Pancreas (tissue), 10 donors: ENCODE measurements at regions of chr22 and their contacts with region 1.

Region 1: GRCh38 chr22:37686002-37686982 is at the start of gene NOL12:
- DNase-seq: peak; percentile 79 to 93 (median 82)
- ATAC-seq: peak; percentile 93 to 96 (median 96)
- H3K4me3 ChIP-seq: peak within 1 kb of the TSS; percentile 70 to 94 (median 85)
- H3K27ac ChIP-seq: peak within 1 kb of the TSS; percentile 24 to 71 (median 65)
- H3K4me1 ChIP-seq: peaks cover 0 to 7% (median 0%) of the 10 kb centered on the region in 3 donors
- H3K27me3 ChIP-seq: no peaks in the 10 kb centered on the region
- CTCF ChIP-seq: no peak
- total RNA-seq, gene NOL12: 6.0 to 12.3 (median 8.5) TPM

Region 2: DNA sequence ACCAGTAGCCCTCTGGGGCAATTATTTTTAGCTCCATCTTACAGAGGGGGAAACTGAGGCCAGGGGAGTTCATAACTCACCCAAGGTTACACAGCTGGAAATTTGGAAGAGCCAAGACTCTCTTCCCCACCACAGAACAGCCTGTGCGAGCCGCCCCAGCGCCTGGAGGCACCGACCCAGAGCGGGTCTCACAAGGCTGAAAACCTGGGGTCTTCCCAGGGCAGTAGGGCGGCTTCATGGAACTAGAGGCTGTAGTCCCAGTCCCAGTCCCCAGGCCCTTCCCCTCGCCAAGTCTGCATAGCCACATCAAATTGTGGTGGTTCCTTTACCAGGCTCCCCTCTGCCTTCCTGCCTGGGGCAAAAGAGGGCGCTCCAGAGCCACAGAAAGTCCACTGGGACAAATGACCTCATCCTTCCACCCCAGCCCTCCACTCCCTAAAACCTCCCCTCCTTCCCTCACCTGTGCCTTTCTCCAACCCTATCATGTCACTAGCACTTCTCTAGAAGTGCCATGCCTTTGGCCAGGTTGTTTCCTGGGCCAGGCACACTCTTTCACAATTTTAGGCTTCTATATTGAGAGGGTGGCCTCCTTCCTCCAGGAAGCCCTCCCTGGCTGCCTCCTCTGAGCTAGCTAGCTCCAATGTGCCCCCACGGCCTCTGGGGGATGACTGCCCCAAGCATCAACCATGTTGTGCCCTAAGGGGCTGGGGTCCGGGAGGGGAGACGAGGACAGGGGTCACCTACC is 141.2 kb before region 1 on chr22:
- intact Hi-C with region 1: loop called in 1 of 3 experiments (anchors 10 kb)
- DNase-seq: peak; percentile 80 to 90 (median 88)
- ATAC-seq: peak; percentile 63 to 71 (median 66)
- H3K4me3 ChIP-seq: peak overlapping the region in 1 of 4 donors; percentile 7
- H3K27ac ChIP-seq: peak overlapping the region; percentile 88 to 96 (median 91)
- H3K4me1 ChIP-seq: peaks cover 36 to 44% (median 39%) of the 10 kb centered on the region in 3 donors
- H3K27me3 ChIP-seq: no peaks in the 10 kb centered on the region
- CTCF ChIP-seq: peak; percentile 57 to 65 (median 62)